K562 (cell line): ENCODE measurements at regions of chr1 and their contacts with region 1.

Region 1: GRCh38 chr1:32716312-32717148 is 14.0 kb upstream of the SYNC start:
- DNase-seq: peak; percentile 95 to 97 (median 96)
- ATAC-seq: peak; percentile 96
- H3K4me3 ChIP-seq: no peak overlapping the region
- H3K27ac ChIP-seq: peak overlapping the region; percentile 68
- H3K4me1 ChIP-seq: peaks cover 18 to 49% of the 10 kb centered on the region in 2 experiments; a peak in 4 of 5 replicates
- H3K27me3 ChIP-seq: no peaks in the 10 kb centered on the region
- CTCF ChIP-seq: peak in 1 of 3 experiments; percentile 23; a peak in 2 of 6 replicates
- EP300 ChIP-seq: peak; percentile 52; the same call in 1 of the 2 replicates
- POLR2A ChIP-seq: no peak; the same call in 1 of the 2 replicates
- RAD21 ChIP-seq: peak in 1 of 2 experiments; percentile 22; a peak in 2 of 4 replicates

Region 2: GRCh38 chr1:32307323-32307722 is 409.2 kb before region 1 on chr1:
- CTCF ChIA-PET with region 1: no interaction called
- POLR2A ChIA-PET with region 1: no interaction called
- in situ Hi-C with region 1: no loop called
- intact Hi-C with region 1: no loop called
- DNase-seq: peak; percentile 40 to 63 (median 46)
- ATAC-seq: peak; percentile 25; the same call in 2 of the 3 replicates
- H3K4me3 ChIP-seq: no peak overlapping the region
- H3K27ac ChIP-seq: peak overlapping the region; percentile 26; the same call in 2 of the 3 replicates
- H3K4me1 ChIP-seq: peaks cover 35 to 47% of the 10 kb centered on the region in 2 experiments
- H3K27me3 ChIP-seq: no peaks in the 10 kb centered on the region
- CTCF ChIP-seq: no peak
- EP300 ChIP-seq: peak; percentile 81
- POLR2A ChIP-seq: no peak
- RAD21 ChIP-seq: no peak

Region 3: GRCh38 chr1:32755098-32755809 is 38.7 kb after region 1 on chr1:
- CTCF ChIA-PET with region 1: interaction called, 3 read pairs
- POLR2A ChIA-PET with region 1: interaction called, 8 read pairs
- in situ Hi-C with region 1: loop called (anchors 10 kb)
- intact Hi-C with region 1: loop called (anchors 1 kb)
- DNase-seq: peak in 1 of 4 experiments; percentile 49
- ATAC-seq: no peak
- H3K4me3 ChIP-seq: peak overlapping the region; percentile 61
- H3K27ac ChIP-seq: peak overlapping the region; percentile 82
- H3K4me1 ChIP-seq: peaks cover 61 to 71% of the 10 kb centered on the region in 2 experiments
- H3K27me3 ChIP-seq: no peaks in the 10 kb centered on the region
- CTCF ChIP-seq: no peak
- EP300 ChIP-seq: no peak
- POLR2A ChIP-seq: no peak
- RAD21 ChIP-seq: no peak

Region 4: GRCh38 chr1:32761253-32761880 is 44.8 kb after region 1 on chr1:
- CTCF ChIA-PET with region 1: interaction called, 3 read pairs
- POLR2A ChIA-PET with region 1: interaction called, 8 read pairs
- in situ Hi-C with region 1: loop called (anchors 10 kb)
- intact Hi-C with region 1: loop called (anchors 1 kb)
- DNase-seq: peak; percentile 69 to 84 (median 80)
- ATAC-seq: peak; percentile 28
- H3K4me3 ChIP-seq: no peak overlapping the region
- H3K27ac ChIP-seq: peak overlapping the region; percentile 33
- H3K4me1 ChIP-seq: peaks cover 62 to 66% of the 10 kb centered on the region in 2 experiments
- H3K27me3 ChIP-seq: no peaks in the 10 kb centered on the region
- CTCF ChIP-seq: no peak
- EP300 ChIP-seq: no peak
- POLR2A ChIP-seq: no peak
- RAD21 ChIP-seq: no peak

Region 5: DNA sequence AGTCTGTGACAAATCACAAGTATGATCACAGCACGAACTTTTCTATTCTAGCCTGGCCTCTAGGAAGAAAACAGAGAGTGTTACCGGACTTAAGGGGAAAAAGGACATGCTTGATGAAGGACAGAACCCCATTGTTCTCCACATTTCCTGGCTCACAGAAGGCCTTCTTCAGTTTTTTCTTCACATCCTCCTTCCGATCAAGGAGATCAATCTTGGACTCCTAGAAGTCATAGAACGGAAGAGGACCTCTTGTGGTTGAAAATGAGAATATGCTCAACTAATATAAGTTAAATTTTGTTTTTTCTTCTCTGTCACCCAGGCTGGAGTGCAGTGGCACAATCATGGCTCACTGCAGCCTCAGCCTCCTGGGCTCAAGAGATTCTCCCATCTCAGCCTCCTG is 70.3 kb after region 1 on chr1:
- CTCF ChIA-PET with region 1: interaction called, 15 read pairs
- POLR2A ChIA-PET with region 1: interaction called, 9 read pairs
- in situ Hi-C with region 1: no loop called
- intact Hi-C with region 1: no loop called
- DNase-seq: no peak
- ATAC-seq: peak; percentile 62
- H3K4me3 ChIP-seq: no peak overlapping the region
- H3K27ac ChIP-seq: no peak overlapping the region
- H3K4me1 ChIP-seq: no peaks in the 10 kb centered on the region
- H3K27me3 ChIP-seq: no peaks in the 10 kb centered on the region
- CTCF ChIP-seq: peak in 2 of 3 experiments; percentile 26 to 43; a peak in 3 of 6 replicates
- EP300 ChIP-seq: no peak
- POLR2A ChIP-seq: no peak
- RAD21 ChIP-seq: 0 out of 4 replicates have a peak, but pooled peaks of 1 of the 2 experiments have one; percentile 11

Region 6: GRCh38 chr1:32870615-32871363 is 154.3 kb after region 1 on chr1 and contains the start of gene FNDC5:
- CTCF ChIA-PET with region 1: interaction called, 26 read pairs
- POLR2A ChIA-PET with region 1: interaction called, 6 read pairs
- in situ Hi-C with region 1: no loop called
- intact Hi-C with region 1: loop called (anchors 1 kb)
- DNase-seq: peak; percentile 37 to 86 (median 72)
- ATAC-seq: peak; percentile 80
- H3K4me3 ChIP-seq: peak within 1 kb of the TSS; percentile 28
- H3K27ac ChIP-seq: no peak within 1 kb of the TSS
- H3K4me1 ChIP-seq: peaks cover 5 to 16% of the 10 kb centered on the region in 2 experiments; a peak in 4 of 5 replicates
- H3K27me3 ChIP-seq: peaks cover 4 to 20% of the 10 kb centered on the region in 2 experiments; a peak in 3 of 5 replicates
- CTCF ChIP-seq: no peak
- EP300 ChIP-seq: no peak
- POLR2A ChIP-seq: no peak
- RAD21 ChIP-seq: no peak
- polyA plus RNA-seq, gene FNDC5: 0.06 to 0.10 TPM

Region 7: DNA sequence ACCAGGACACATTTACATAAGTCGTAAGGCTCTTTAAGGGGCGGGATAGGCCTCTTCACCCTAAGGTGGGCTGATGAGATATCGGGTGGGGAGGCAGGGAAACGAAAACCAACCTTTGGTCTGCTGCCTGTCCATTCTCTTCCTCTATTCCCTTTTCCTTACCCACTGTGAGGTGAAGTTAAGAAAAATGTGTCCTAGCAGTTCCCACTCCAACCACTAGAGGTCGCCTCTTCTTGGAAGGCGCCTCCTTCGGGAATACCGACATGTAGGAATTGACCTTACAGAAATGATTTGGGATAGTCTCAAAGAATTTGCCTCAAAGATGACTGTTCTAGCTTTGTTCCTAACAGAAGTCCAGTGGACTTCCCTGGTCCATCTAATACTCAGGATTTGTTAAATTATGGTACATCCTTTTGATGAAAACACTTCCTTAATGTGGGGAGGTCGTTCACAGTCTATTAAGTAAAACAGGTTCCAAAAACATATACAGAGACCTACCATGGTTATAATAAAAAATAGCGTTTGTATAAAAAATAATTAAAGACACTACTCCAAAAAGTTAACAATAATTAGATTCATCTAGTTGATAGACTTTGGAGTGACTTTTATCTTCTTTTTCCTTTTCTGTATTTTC is 378.6 kb after region 1 on chr1:
- CTCF ChIA-PET with region 1: no interaction called
- POLR2A ChIA-PET with region 1: no interaction called
- in situ Hi-C with region 1: no loop called
- intact Hi-C with region 1: loop called (anchors 5 kb)
- DNase-seq: peak; percentile 35 to 69 (median 60)
- ATAC-seq: no peak; the same call in 2 of the 3 replicates
- H3K4me3 ChIP-seq: no peak overlapping the region
- H3K27ac ChIP-seq: no peak overlapping the region
- H3K4me1 ChIP-seq: peaks cover 0 to 12% of the 10 kb centered on the region in 2 experiments; a peak in 4 of 5 replicates
- H3K27me3 ChIP-seq: peaks cover 0 to 4% of the 10 kb centered on the region in 2 experiments; a peak in 1 of 5 replicates
- CTCF ChIP-seq: peak; percentile 90 to 99 (median 96)
- EP300 ChIP-seq: no peak
- POLR2A ChIP-seq: no peak
- RAD21 ChIP-seq: peak; percentile 44 to 75